ENCODE measurements at regions of chr1 and their contacts with region 1.

Region 1: GRCh38 chr1:26233903-26234643 is at the start of gene CEP85:
- DNase-seq: peak; percentile 95
- ATAC-seq: peak; percentile 95
- H3K4me3 ChIP-seq: peak within 1 kb of the TSS; percentile 98
- H3K27ac ChIP-seq: peak within 1 kb of the TSS; percentile 66
- H3K4me1 ChIP-seq: peaks cover 9% of the 10 kb centered on the region
- H3K27me3 ChIP-seq: no peaks in the 10 kb centered on the region
- CTCF ChIP-seq: peak; percentile 88 to 98 (median 91)
- EP300 ChIP-seq: no peak
- POLR2A ChIP-seq: peak; percentile 95
- RAD21 ChIP-seq: peak; percentile 84
- polyA plus RNA-seq, gene CEP85: 8.4 to 8.6 TPM

Region 2: GRCh38 chr1:25959611-25960010 is 274.5 kb before region 1 on chr1:
- CTCF ChIA-PET with region 1: no interaction called
- POLR2A ChIA-PET with region 1: no interaction called
- RAD21 ChIA-PET with region 1: no interaction called
- SMC1A ChIA-PET with region 1: no interaction called
- in situ Hi-C with region 1: no loop called
- intact Hi-C with region 1: no loop called
- DNase-seq: no peak
- ATAC-seq: no peak
- H3K4me3 ChIP-seq: no peak overlapping the region
- H3K27ac ChIP-seq: no peak overlapping the region
- H3K4me1 ChIP-seq: no peaks in the 10 kb centered on the region
- H3K27me3 ChIP-seq: no peaks in the 10 kb centered on the region
- CTCF ChIP-seq: no peak
- EP300 ChIP-seq: no peak
- POLR2A ChIP-seq: no peak
- RAD21 ChIP-seq: no peak

Region 3: DNA sequence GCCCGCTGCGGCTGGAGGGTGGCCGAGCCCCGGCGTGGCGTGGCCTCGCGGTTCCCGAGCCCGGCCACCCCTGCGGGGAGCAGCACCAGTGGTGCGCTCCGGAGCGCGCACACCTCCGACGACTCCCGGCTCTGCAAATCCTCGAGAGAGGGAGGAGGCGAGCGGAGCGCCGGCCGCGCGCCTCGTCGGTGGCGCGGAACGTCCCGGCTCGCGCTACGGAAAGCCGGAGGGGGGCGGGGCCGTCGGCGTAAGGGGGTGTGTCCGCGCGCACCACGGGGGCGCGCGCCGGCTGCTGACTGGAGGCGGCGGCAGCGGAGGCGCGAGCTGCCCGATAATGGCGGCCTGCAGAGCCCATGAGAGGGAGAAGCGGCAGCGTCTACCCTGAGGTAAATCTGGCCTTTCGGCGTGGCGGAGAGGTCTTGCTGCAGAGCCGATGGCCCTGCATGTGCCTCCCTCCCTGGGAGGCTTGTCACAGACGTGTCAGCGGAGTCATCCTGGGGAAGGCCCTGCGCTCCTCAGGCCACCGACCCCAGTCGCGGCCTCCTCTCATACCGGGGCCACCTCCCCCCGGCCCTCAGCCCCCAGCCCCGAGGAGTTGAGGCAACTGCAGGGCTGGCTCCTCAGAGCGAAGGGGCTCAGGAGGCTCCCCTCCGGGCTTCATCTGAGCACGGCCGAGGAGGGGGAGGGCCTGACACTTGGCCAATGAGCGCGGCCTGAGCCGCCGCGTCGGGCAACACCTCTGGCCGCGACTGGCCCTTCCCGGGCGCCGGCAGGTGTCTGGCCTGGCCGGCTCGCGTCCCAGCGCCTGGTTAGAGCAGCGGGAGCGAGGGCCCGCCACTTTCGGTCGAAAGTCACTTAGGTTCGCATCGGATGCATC is 122.3 kb before region 1 on chr1 and contains the start of gene PDIK1L:
- CTCF ChIA-PET with region 1: interaction called, 5 read pairs
- POLR2A ChIA-PET with region 1: interaction called, 3 read pairs
- RAD21 ChIA-PET with region 1: interaction called, 4 read pairs
- SMC1A ChIA-PET with region 1: interaction called, 4 read pairs
- in situ Hi-C with region 1: loop called (anchors 5 kb)
- intact Hi-C with region 1: loop called (anchors 2 kb)
- DNase-seq: peak; percentile 73
- ATAC-seq: peak; percentile 86
- H3K4me3 ChIP-seq: peak within 1 kb of the TSS; percentile 89
- H3K27ac ChIP-seq: peak within 1 kb of the TSS; percentile 85
- H3K4me1 ChIP-seq: peaks cover 12% of the 10 kb centered on the region
- H3K27me3 ChIP-seq: no peaks in the 10 kb centered on the region
- CTCF ChIP-seq: no peak
- EP300 ChIP-seq: 0 out of 4 replicates have a peak, but pooled peaks of 1 of the 2 experiments have one; percentile 5
- POLR2A ChIP-seq: peak; percentile 88
- RAD21 ChIP-seq: no peak
- polyA plus RNA-seq, gene PDIK1L: 4.0 to 9.5 TPM

Region 4: GRCh38 chr1:26126321-26127084 is 107.6 kb before region 1 on chr1:
- CTCF ChIA-PET with region 1: interaction called, 20 read pairs
- POLR2A ChIA-PET with region 1: no interaction called
- RAD21 ChIA-PET with region 1: interaction called, 3 read pairs
- SMC1A ChIA-PET with region 1: interaction called, 7 read pairs
- in situ Hi-C with region 1: no loop called
- intact Hi-C with region 1: no loop called
- DNase-seq: no peak
- ATAC-seq: peak; percentile 97
- H3K4me3 ChIP-seq: no peak overlapping the region
- H3K27ac ChIP-seq: peak overlapping the region; percentile 27; the same call in 1 of the 2 replicates
- H3K4me1 ChIP-seq: peaks cover 4% of the 10 kb centered on the region
- H3K27me3 ChIP-seq: no peaks in the 10 kb centered on the region
- CTCF ChIP-seq: no peak
- EP300 ChIP-seq: no peak
- POLR2A ChIP-seq: no peak
- RAD21 ChIP-seq: no peak

Region 5: DNA sequence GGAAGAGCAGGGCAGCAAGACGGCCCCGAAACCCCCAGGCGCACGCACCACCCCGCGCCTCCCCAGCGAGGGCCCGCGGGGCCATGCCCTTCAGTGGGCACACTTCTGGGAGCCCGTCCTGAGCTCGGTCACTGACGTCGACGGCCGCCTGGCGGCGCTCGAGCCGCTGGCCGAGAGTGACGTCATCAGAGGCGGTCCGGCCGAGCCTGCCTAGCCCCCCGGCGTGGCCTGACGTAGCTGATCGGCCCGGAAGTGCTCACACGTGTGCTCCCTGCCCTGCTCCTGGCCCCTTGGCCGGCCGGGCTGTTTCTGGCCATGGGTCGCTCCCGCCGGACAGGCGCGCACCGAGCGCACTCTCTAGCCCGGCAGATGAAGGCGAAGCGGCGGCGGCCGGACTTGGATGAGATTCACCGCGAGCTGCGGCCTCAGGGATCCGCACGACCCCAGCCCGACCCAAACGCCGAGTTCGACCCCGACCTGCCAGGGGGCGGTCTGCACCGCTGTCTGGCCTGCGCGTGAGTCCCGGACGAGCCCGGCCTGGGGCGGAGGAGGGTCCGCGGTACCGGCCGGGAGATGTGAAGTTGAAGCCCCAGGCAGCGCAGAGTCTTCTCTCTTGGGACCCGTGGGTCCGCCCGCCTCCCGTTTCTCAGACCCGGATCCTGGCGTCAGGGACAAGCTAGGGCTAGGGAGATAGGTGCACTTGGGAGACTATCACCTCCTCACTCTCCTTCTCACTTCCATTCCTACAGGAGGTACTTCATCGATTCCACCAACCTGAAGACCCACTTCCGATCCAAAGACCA is 64.2 kb before region 1 on chr1 and contains the start of gene ZNF593:
- CTCF ChIA-PET with region 1: interaction called, 110 read pairs
- POLR2A ChIA-PET with region 1: interaction called, 11 read pairs
- RAD21 ChIA-PET with region 1: interaction called, 44 read pairs
- SMC1A ChIA-PET with region 1: interaction called, 23 read pairs
- in situ Hi-C with region 1: no loop called
- intact Hi-C with region 1: loop called (anchors 1 kb)
- DNase-seq: peak; percentile 61
- ATAC-seq: peak; percentile 98
- H3K4me3 ChIP-seq: peak within 1 kb of the TSS; percentile 97
- H3K27ac ChIP-seq: peak within 1 kb of the TSS; percentile 79
- H3K4me1 ChIP-seq: peaks cover 7% of the 10 kb centered on the region
- H3K27me3 ChIP-seq: no peaks in the 10 kb centered on the region
- CTCF ChIP-seq: peak; percentile 93 to 98 (median 95)
- EP300 ChIP-seq: no peak
- POLR2A ChIP-seq: peak; percentile 92
- RAD21 ChIP-seq: peak; percentile 36; the same call in 1 of the 2 replicates
- polyA plus RNA-seq, gene ZNF593: 7.7 to 20.1 TPM

Region 6: GRCh38 chr1:26218906-26219494 is 15.1 kb before region 1 on chr1:
- CTCF ChIA-PET with region 1: interaction called, 19 read pairs
- POLR2A ChIA-PET with region 1: interaction called, 3 read pairs
- RAD21 ChIA-PET with region 1: no interaction called
- SMC1A ChIA-PET with region 1: interaction called, 3 read pairs
- in situ Hi-C with region 1: no loop called
- intact Hi-C with region 1: no loop called
- DNase-seq: no peak
- ATAC-seq: no peak
- H3K4me3 ChIP-seq: no peak overlapping the region
- H3K27ac ChIP-seq: no peak overlapping the region
- H3K4me1 ChIP-seq: no peaks in the 10 kb centered on the region
- H3K27me3 ChIP-seq: no peaks in the 10 kb centered on the region; a peak in 1 of 4 replicates
- CTCF ChIP-seq: no peak
- EP300 ChIP-seq: no peak
- POLR2A ChIP-seq: no peak
- RAD21 ChIP-seq: no peak

Region 7: GRCh38 chr1:26279456-26280332 is 45.6 kb after region 1 on chr1 and contains the start of gene SH3BGRL3:
- CTCF ChIA-PET with region 1: interaction called, 68 read pairs
- POLR2A ChIA-PET with region 1: interaction called, 4 read pairs
- RAD21 ChIA-PET with region 1: interaction called, 7 read pairs
- SMC1A ChIA-PET with region 1: interaction called, 6 read pairs
- in situ Hi-C with region 1: no loop called
- intact Hi-C with region 1: no loop called
- DNase-seq: no peak
- ATAC-seq: peak; percentile 92
- H3K4me3 ChIP-seq: peak within 1 kb of the TSS; percentile 88
- H3K27ac ChIP-seq: peak within 1 kb of the TSS; percentile 87
- H3K4me1 ChIP-seq: peaks cover 53% of the 10 kb centered on the region
- H3K27me3 ChIP-seq: no peaks in the 10 kb centered on the region
- CTCF ChIP-seq: peak; percentile 22 to 47 (median 41); a peak in 4 of 6 replicates
- EP300 ChIP-seq: no peak
- POLR2A ChIP-seq: peak; percentile 96
- RAD21 ChIP-seq: no peak
- polyA plus RNA-seq, gene SH3BGRL3: 121 to 129 TPM

Region 8: GRCh38 chr1:26363549-26364448 is 129.7 kb after region 1 on chr1:
- CTCF ChIA-PET with region 1: interaction called, 10 read pairs
- POLR2A ChIA-PET with region 1: no interaction called
- RAD21 ChIA-PET with region 1: no interaction called
- SMC1A ChIA-PET with region 1: no interaction called
- in situ Hi-C with region 1: no loop called
- intact Hi-C with region 1: no loop called
- DNase-seq: peak; percentile 16
- ATAC-seq: peak; percentile 91
- H3K4me3 ChIP-seq: no peak overlapping the region
- H3K27ac ChIP-seq: no peak overlapping the region
- H3K4me1 ChIP-seq: no peaks in the 10 kb centered on the region; the same call in 1 of the 2 replicates
- H3K27me3 ChIP-seq: peaks cover 3 to 5% of the 10 kb centered on the region in 2 experiments; a peak in 3 of 4 replicates
- CTCF ChIP-seq: peak; percentile 85 to 98 (median 98)
- EP300 ChIP-seq: no peak
- POLR2A ChIP-seq: no peak
- RAD21 ChIP-seq: peak; percentile 81